KBM-7 (cell line): ENCODE measurements at regions of chr12 and their contacts with region 1.

Region 1: DNA sequence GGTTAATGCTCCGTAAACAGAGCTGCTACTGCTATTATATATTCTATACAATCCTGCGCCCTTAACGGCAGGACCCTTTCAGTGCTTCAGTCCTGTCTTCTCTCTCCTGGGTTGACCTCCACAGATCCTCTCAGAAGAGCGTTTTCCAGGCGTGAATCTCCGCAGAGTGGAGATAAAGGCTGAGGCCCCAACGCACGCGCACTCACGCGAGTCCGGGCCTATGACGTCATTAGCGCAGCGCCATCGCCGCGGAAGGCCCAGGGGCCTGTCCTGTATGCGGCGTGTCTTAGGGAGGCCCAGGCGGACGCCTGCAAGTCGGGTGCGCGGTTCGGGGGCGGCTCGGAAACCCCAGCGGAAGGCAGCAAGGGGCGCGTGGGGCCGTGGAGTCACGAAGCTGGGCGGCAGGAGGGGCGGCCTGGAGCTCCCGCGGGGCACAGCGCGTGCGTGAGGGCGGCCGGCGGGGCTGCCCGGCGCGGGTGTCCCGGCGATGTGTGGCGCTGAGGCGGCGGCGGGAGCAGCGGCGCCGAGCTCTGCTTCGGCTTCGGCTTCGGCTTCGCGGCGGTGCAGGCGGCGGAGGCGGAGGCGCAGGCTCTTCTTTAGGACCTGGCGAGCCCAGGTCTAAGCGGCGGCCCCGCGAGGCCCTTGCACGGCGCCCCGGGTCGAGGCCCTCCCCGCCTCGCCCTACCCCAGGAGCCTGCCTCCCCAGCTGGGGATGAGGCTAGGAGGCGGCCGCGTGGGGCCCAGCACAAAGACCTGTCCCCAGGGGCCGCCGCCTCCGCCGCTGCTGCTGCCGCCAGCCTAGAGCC is at the start of gene MAPKAPK5:
- DNase-seq: peak; percentile 97

Region 2: DNA sequence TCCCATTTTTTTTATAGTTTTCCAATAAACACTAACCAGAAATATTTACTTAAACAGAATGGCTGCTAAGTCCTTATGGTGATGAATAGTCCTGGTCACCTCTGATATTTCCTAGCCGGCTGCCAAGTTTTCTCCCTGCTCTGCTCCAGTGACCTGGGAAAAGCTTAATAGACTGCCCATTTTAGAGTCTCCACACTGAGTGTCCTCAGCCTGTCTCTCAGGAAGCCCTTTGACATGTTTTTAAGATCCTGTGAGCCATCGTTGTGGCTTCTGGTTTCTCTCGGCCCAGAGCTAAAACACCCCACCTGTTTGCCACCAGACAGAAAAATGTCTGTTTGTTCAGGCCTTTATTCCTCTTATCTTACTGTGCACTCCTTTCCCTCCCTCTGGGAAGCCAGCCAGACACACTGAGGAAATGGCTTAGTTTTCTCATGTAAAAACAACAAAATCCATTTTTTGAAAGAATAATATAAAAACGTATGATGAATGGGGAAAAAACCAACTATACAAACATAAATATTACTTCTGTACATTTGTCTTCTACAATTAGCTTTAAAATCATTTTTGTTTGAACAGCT is 100.6 kb before region 1 on chr12:
- in situ Hi-C with region 1: loop called (anchors 25 kb)
- DNase-seq: peak; percentile 80